ENCODE measurements at regions of chr17 and their contacts with region 1.

Region 1: GRCh38 chr17:67559377-67559966 is 158.3 kb upstream of the NOL11 start:
- DNase-seq: no peak
- ATAC-seq: no peak
- H3K4me3 ChIP-seq: no peak overlapping the region
- H3K4me3 Mint-ChIP-seq: no peak overlapping the region
- H3K27ac ChIP-seq: no peak overlapping the region
- H3K27ac Mint-ChIP-seq: no peak overlapping the region
- H3K4me1 ChIP-seq: no peaks in the 10 kb centered on the region
- H3K4me1 Mint-ChIP-seq: no peaks in the 10 kb centered on the region
- H3K27me3 ChIP-seq: no peaks in the 10 kb centered on the region
- H3K27me3 Mint-ChIP-seq: no peaks in the 10 kb centered on the region
- CTCF ChIP-seq: peak; percentile 33

Region 2: GRCh38 chr17:67401598-67402488 is 157.6 kb before region 1 on chr17:
- CTCF ChIA-PET with region 1: no interaction called
- POLR2A ChIA-PET with region 1: no interaction called
- intact Hi-C with region 1: no loop called
- DNase-seq: no peak
- ATAC-seq: no peak
- H3K4me3 ChIP-seq: no peak overlapping the region
- H3K4me3 Mint-ChIP-seq: no peak overlapping the region
- H3K27ac ChIP-seq: no peak overlapping the region
- H3K27ac Mint-ChIP-seq: no peak overlapping the region
- H3K4me1 ChIP-seq: peaks cover 8 to 17% of the 10 kb centered on the region in 2 donors
- H3K4me1 Mint-ChIP-seq: peaks cover 29% of the 10 kb centered on the region
- H3K27me3 ChIP-seq: no peaks in the 10 kb centered on the region
- H3K27me3 Mint-ChIP-seq: no peaks in the 10 kb centered on the region
- CTCF ChIP-seq: no peak

Region 3: DNA sequence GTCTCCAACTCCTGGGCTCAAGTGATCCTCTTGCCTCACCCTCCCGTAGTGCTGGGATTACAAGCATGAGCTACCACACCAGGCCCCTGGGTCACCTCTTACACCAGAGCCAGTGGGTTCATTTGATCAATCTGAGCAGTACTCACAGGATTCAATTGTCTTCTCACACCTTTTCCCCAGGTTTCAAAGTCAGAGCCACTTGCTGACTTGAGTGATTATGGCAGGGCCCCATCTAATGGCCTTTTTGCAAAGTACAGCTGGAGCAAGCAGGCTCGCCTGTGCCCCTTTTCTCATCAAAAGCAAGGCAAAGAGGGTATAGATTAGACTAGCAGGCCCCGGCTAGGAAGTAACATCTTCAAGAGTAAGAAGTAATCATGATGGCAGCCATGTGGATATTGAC is 43.5 kb after region 1 on chr17:
- CTCF ChIA-PET with region 1: interaction called, 10 read pairs
- POLR2A ChIA-PET with region 1: no interaction called
- intact Hi-C with region 1: loop called (anchors 5 kb)
- DNase-seq: peak; percentile 30
- ATAC-seq: peak; percentile 31
- H3K4me3 ChIP-seq: no peak overlapping the region
- H3K4me3 Mint-ChIP-seq: no peak overlapping the region
- H3K27ac ChIP-seq: no peak overlapping the region
- H3K27ac Mint-ChIP-seq: no peak overlapping the region
- H3K4me1 ChIP-seq: no peaks in the 10 kb centered on the region
- H3K4me1 Mint-ChIP-seq: peaks cover 2% of the 10 kb centered on the region
- H3K27me3 ChIP-seq: no peaks in the 10 kb centered on the region
- H3K27me3 Mint-ChIP-seq: no peaks in the 10 kb centered on the region
- CTCF ChIP-seq: peak; percentile 38

Region 4: DNA sequence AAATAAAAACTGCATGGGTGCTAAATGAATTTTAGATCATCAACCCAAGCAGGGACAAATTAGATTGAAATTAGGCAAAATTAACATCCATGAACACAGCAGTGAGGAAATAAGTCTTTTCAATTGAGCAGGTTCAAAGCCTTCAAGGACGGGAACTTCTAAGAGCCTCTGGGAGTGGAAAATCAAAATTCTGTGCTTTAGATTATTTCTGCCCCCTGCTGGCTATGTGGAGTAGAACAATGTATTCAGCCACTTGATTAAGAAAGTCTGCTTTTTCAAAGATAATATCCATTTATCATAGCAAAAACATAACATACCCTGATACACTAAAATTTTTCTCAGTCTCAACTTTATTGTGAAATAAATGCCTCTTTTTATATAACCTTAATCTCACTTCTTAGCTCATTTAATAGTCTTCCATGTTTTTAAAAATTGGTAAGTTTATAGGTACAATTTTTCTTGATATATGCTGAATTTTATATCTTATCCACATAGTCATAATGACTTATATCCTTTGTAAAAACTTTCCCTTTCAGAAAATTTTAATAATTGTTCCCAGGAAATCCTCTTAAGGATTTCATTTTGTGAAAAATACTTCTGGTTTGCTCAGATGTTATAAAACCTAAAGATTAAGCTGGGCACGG is 130.2 kb after region 1 on chr17:
- CTCF ChIA-PET with region 1: interaction called, 6 read pairs
- POLR2A ChIA-PET with region 1: no interaction called
- intact Hi-C with region 1: loop called (anchors 1 kb)
- DNase-seq: peak; percentile 71
- ATAC-seq: peak; percentile 63
- H3K4me3 ChIP-seq: no peak overlapping the region
- H3K4me3 Mint-ChIP-seq: no peak overlapping the region
- H3K27ac ChIP-seq: no peak overlapping the region
- H3K27ac Mint-ChIP-seq: no peak overlapping the region
- H3K4me1 ChIP-seq: no peaks in the 10 kb centered on the region
- H3K4me1 Mint-ChIP-seq: peaks cover 4% of the 10 kb centered on the region
- H3K27me3 ChIP-seq: no peaks in the 10 kb centered on the region
- H3K27me3 Mint-ChIP-seq: no peaks in the 10 kb centered on the region
- CTCF ChIP-seq: peak; percentile 96

Measured in B cell (primary cell).